Activated CD4-positive, alpha-beta T cell treated with anti-CD3 and anti-CD28 coated beads, Interleukin-2, amount 10 ng/mL, durations not matched to agents 24 days and 14 days (primary cell): ENCODE measurements at regions of chr3 and their contacts with region 1.

Region 1: GRCh38 chr3:56801662-56802377 is at the start of gene ARHGEF3:
- DNase-seq: peak; percentile 94
- H3K4me3 Mint-ChIP-seq: peak within 1 kb of the TSS; percentile 97
- H3K27ac Mint-ChIP-seq: peak within 1 kb of the TSS; percentile 87
- H3K4me1 Mint-ChIP-seq: peaks cover 47% of the 10 kb centered on the region
- H3K27me3 Mint-ChIP-seq: no peaks in the 10 kb centered on the region
- total RNA-seq, gene ARHGEF3: 52.7 and 54.4 TPM in 2 replicates

Region 2: GRCh38 chr3:56595975-56596840 is 205.6 kb before region 1 on chr3:
- intact Hi-C with region 1: no loop called
- DNase-seq: no peak
- H3K4me3 Mint-ChIP-seq: no peak overlapping the region
- H3K27ac Mint-ChIP-seq: no peak overlapping the region
- H3K4me1 Mint-ChIP-seq: peaks cover 25% of the 10 kb centered on the region
- H3K27me3 Mint-ChIP-seq: no peaks in the 10 kb centered on the region

Region 3: DNA sequence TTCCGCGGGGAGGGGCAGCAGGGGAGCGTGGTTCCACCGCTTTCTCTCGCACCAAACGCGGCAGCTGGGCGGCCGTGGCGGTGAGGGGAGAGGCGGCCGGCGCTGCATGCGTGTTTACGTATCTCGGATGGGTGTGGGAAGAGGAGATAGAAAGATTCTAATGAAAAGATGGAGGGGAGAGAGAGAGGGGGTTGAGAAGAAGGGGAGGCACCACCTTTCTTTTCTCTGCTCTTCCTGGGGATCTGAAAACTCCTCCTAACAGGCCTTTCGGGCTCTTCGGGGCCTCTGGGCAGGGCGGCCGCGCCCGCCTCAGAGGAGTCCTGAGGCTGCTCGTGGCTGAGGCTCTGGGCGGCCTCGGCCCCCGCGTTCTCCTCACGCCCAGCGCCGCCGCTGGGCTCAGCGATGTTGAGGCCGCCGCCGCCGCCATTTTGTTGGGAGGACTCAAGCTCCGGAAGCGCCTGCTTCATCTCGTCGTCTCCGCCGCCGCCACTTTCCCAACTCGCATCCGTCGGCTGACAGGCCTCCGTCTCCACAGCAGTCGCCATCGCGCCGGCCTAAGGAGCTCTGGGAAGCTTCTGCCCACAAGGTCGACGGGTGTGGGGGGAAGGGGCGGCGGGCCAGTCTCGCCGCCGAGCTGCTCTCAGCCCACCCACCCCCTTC is 119.2 kb before region 1 on chr3:
- intact Hi-C with region 1: loop called (anchors 1 kb)
- DNase-seq: peak; percentile 94
- H3K4me3 Mint-ChIP-seq: peak overlapping the region; percentile 100
- H3K27ac Mint-ChIP-seq: peak overlapping the region; percentile 99
- H3K4me1 Mint-ChIP-seq: peaks cover 29% of the 10 kb centered on the region
- H3K27me3 Mint-ChIP-seq: no peaks in the 10 kb centered on the region

Region 4: GRCh38 chr3:56725175-56725574 is 76.6 kb before region 1 on chr3:
- intact Hi-C with region 1: loop called (anchors 1 kb)
- DNase-seq: peak; percentile 92
- H3K4me3 Mint-ChIP-seq: peak overlapping the region; percentile 79
- H3K27ac Mint-ChIP-seq: peak overlapping the region; percentile 79
- H3K4me1 Mint-ChIP-seq: peaks cover 52% of the 10 kb centered on the region
- H3K27me3 Mint-ChIP-seq: no peaks in the 10 kb centered on the region

Region 5: DNA sequence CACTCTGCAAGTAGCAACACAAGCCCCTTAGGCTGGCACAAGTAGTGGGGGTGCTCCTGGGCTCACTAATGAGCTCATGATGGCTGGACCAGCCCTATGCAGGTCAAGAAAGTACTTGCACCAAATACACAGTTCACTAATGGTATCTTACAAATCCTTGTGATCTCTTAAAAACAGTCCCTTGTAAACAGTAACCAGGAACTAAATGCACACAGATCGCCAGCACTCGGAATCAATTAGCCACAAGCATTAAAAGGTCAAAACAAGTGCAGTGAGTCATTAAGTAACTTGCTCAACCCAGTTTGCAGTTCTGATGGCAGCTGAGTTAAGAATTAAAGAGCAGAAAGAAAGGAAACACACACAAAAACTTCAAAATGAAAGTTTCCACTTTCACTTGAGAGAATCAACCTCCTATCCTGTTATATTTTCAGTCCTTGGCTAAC is 43.3 kb before region 1 on chr3:
- intact Hi-C with region 1: loop called (anchors 1 kb)
- DNase-seq: peak; percentile 80
- H3K4me3 Mint-ChIP-seq: peak overlapping the region; percentile 77
- H3K27ac Mint-ChIP-seq: peak overlapping the region; percentile 90
- H3K4me1 Mint-ChIP-seq: peaks cover 75% of the 10 kb centered on the region
- H3K27me3 Mint-ChIP-seq: no peaks in the 10 kb centered on the region

Region 6: DNA sequence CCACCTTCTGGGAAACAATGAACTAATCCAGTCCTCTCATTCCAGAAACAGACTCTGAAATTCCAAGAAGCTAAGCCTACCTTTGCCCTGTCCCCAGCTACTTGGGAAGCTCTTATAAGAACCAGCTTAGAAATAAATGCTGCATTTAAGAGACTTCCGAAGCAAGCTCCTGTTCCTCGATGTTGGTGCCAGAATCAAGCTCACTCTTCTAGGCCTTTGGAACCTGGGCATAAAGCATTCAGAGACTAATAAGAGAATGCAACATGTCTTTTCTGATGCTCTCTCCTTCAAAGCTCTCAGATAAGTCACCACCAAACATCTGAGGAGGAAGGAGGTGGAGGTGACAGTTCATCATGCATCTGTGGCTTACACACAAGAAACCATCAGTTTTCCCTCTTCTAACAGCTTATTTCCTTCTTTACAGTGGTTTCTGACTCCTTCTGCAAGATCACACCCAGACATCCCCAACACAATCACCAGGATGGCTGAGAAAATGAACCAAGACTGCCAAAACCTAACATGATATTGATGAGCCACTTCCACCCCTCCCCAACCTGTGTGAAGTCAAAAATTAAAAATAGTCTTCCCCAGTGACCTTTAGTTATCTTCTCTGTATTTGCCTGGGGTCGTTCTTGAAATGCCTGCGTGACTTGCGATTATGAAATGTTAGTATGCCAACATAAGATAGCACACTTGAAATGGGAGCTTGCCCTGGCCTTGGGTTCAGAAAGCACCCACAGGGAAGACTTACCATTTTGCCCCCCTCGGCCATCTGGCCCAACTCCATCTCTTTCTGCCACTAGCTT is 11.6 kb before region 1 on chr3:
- intact Hi-C with region 1: loop called (anchors 1 kb)
- DNase-seq: peak; percentile 80
- H3K4me3 Mint-ChIP-seq: peak overlapping the region; percentile 67
- H3K27ac Mint-ChIP-seq: peak overlapping the region; percentile 89
- H3K4me1 Mint-ChIP-seq: peaks cover 71% of the 10 kb centered on the region
- H3K27me3 Mint-ChIP-seq: no peaks in the 10 kb centered on the region

Region 7: DNA sequence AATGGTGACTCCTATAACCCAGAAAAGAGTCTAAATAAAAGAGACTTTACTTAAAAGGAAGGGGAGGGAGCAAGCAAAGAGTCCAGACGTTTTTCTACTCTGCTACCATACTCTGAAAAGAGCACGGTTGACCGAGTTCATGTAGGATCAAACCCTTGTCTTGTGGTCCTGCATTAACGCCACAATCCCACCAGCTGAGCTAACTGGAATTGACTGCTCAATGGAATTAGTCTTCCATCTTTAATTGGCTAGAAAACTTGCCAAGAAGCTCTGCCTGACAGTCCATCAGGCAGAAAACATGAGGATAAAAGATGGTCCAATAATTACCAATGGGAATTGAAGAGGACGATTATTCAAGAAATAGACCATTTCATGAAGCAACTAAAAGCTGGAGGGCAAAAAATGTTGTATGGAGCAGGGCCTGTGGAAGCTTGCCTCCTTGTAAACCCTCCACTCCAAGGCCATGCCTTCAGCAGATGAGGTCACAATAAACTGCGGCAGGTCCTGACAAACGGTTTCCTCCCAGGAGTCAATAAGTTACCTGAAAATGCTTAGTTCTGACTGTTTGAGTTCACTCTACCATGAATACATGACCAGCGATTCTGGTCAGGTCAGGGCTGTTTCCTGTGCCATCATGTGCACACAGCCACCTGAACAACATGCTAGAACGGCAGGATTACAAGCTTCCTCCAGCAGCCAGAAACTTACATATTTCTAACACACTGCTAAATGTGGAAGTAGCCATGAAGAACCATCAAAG is 35.6 kb after region 1 on chr3:
- intact Hi-C with region 1: no loop called
- DNase-seq: no peak
- H3K4me3 Mint-ChIP-seq: no peak overlapping the region
- H3K27ac Mint-ChIP-seq: no peak overlapping the region
- H3K4me1 Mint-ChIP-seq: peaks cover 12% of the 10 kb centered on the region
- H3K27me3 Mint-ChIP-seq: no peaks in the 10 kb centered on the region

Region 8: DNA sequence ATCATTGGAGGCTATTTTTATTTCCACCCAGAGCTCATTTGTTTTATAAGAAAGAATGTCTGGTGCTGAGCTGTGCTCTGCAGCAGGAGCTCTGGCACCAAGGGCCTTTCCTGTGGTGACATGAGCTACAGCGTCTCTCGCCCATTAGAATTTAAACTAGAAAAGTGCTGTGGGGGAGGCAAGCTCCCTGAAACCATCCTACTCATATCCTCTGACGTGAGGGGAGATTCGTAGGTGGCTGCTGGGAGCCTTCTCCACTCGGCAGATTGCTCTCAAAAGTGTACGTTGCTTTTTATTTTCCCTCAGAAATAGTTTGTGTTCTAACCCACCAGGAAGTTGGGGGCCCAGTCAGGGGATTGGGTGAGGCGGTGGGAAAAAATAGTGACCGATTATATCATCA is 76.3 kb after region 1 on chr3:
- intact Hi-C with region 1: loop called (anchors 1 kb)
- DNase-seq: peak; percentile 80
- H3K4me3 Mint-ChIP-seq: peak overlapping the region; percentile 76
- H3K27ac Mint-ChIP-seq: peak overlapping the region; percentile 96
- H3K4me1 Mint-ChIP-seq: peaks cover 78% of the 10 kb centered on the region
- H3K27me3 Mint-ChIP-seq: no peaks in the 10 kb centered on the region

Region 9: DNA sequence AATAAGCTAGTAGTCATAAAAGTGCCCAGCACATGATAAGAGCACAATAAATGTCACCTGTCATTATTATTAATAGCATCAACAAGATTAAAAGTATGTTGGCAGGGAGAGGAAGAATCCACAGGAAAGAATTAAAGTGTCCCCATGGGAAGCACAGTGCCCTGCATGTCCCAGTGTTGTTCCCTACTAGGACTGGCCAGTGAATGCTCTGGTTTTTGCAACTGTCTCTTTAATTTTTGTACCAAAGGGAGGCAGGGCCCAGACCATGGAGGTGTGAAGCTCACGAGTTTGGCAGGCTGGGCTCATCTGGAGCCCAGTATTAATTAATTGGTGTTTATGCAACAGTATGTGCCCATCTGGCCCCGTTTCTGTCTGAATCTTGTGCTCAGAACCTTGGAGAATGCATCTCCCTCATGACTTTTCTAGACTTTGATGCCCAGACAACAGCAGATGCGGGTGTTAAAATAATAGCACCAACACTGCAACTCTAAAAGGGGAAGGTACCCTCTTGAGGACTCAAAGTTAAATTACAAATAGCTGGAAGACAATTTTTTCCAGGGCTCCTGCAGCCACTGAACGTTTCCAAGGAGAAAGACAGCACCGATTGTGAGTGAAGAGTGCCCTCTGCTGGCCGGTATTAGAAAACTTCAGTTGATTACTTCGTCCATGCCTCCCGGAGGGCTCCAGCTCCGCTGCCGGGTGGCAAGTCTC is 186.8 kb after region 1 on chr3:
- intact Hi-C with region 1: loop called (anchors 1 kb)
- DNase-seq: peak; percentile 91
- H3K4me3 Mint-ChIP-seq: no peak overlapping the region
- H3K27ac Mint-ChIP-seq: no peak overlapping the region
- H3K4me1 Mint-ChIP-seq: peaks cover 30% of the 10 kb centered on the region
- H3K27me3 Mint-ChIP-seq: peaks cover 26% of the 10 kb centered on the region